CD14-positive monocyte (primary cell): ENCODE measurements at regions of chr16 and their contacts with region 1.

Region 1: DNA sequence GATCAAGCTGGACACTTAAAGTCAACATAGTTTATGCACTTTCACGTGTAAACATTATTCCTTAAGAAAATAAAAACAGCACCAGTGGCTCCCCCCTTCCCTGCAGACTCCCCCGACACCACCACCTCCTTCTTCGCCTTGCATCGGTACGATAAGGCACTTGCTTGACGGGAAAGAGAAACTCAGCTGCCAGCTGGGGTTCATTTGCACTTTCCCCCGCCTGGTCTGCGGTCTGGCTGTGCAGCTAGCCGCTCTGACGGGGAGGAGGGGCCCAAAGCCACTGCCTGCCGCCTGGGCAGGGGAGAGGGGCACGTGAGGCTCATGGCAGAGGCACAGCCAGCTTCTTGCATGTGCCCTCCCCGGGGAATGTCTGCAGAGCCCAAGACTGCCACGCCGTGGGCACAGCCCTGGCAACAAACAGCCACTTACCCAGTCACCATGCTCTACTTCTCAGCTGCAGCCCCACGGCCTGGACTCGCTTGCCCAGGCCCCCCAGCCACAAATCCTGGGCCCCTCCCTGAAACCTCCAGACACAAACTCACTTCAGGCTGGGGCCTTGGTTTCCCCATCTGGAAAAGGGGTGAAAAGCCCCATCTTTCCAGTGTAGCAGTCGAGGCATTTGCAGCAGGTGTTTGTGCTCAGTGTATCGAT is 16.5 kb upstream of the PRM1 start:
- DNase-seq: peak; percentile 42 to 50 (median 46)
- H3K4me3 ChIP-seq: peak overlapping the region in 1 of 3 experiments; percentile 57
- H3K4me3 Mint-ChIP-seq: peak overlapping the region; percentile 66 to 85
- H3K27ac ChIP-seq: no peak overlapping the region
- H3K27ac Mint-ChIP-seq: peak overlapping the region in 1 of 7 donors; percentile 57
- H3K4me1 ChIP-seq: peaks cover 12 to 15% of the 10 kb centered on the region in 2 donors
- H3K4me1 Mint-ChIP-seq: peaks cover 20% of the 10 kb centered on the region
- H3K27me3 ChIP-seq: peaks cover 0 to 6% of the 10 kb centered on the region in 2 donors
- H3K27me3 Mint-ChIP-seq: peaks cover 22 to 39% (median 38%) of the 10 kb centered on the region in 3 donors
- CTCF ChIP-seq: no peak

Region 2: DNA sequence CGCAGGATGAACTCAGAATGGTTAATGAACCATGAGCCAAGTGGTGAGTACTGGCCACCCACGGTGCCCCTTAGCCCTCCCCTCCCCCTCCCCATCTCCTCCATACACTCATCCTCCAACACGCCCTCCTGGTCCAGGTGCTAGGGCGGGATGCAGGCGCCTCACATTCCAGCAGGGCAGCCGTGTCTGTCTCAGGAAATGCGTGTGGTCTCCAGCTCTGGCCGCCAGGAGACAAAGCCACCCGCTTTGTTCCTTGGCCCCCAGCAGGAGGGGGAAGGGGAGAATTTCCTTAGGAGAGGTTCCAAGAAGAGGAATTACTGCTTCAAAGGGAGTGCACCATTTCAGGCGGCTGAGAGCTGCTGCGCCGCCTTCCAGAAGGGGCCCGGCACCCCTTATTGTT is 17.9 kb after region 1 on chr16:
- intact Hi-C with region 1: no loop called
- DNase-seq: no peak
- H3K4me3 ChIP-seq: no peak overlapping the region
- H3K4me3 Mint-ChIP-seq: no peak overlapping the region
- H3K27ac ChIP-seq: no peak overlapping the region
- H3K27ac Mint-ChIP-seq: no peak overlapping the region
- H3K4me1 ChIP-seq: peaks cover 23 to 26% of the 10 kb centered on the region in 2 donors
- H3K4me1 Mint-ChIP-seq: peaks cover 31% of the 10 kb centered on the region
- H3K27me3 ChIP-seq: peaks cover 0 to 9% of the 10 kb centered on the region in 2 donors
- H3K27me3 Mint-ChIP-seq: peaks cover 26 to 49% (median 27%) of the 10 kb centered on the region in 3 donors
- CTCF ChIP-seq: no peak

Region 3: GRCh38 chr16:11333711-11334110 is 36.1 kb after region 1 on chr16:
- intact Hi-C with region 1: loop called in 1 of 2 experiments (anchors 5 kb)
- DNase-seq: no peak
- H3K4me3 ChIP-seq: no peak overlapping the region
- H3K4me3 Mint-ChIP-seq: no peak overlapping the region
- H3K27ac ChIP-seq: no peak overlapping the region
- H3K27ac Mint-ChIP-seq: no peak overlapping the region
- H3K4me1 ChIP-seq: peaks cover 12% of the 10 kb centered on the region in 2 donors
- H3K4me1 Mint-ChIP-seq: peaks cover 16% of the 10 kb centered on the region
- H3K27me3 ChIP-seq: peaks cover 0 to 7% of the 10 kb centered on the region in 2 donors
- H3K27me3 Mint-ChIP-seq: peaks cover 24 to 51% (median 37%) of the 10 kb centered on the region in 3 donors
- CTCF ChIP-seq: no peak